ENCODE measurements at regions of chr11 and their contacts with region 1.

Region 1: GRCh38 chr11:128630367-128631230 is 43.2 kb upstream of the ETS1 start:
- DNase-seq: peak; percentile 84 to 88 (median 86)
- H3K4me3 ChIP-seq: no peak overlapping the region
- H3K4me3 Mint-ChIP-seq: peak overlapping the region in 7 of 8 donors; percentile 45 to 88 (median 75)
- H3K27ac ChIP-seq: peak overlapping the region; percentile 49
- H3K27ac Mint-ChIP-seq: peak overlapping the region; percentile 92 to 97 (median 93)
- H3K4me1 ChIP-seq: peaks cover 64% of the 10 kb centered on the region
- H3K4me1 Mint-ChIP-seq: peaks cover 49 to 68% (median 59%) of the 10 kb centered on the region in 4 donors
- H3K27me3 ChIP-seq: no peaks in the 10 kb centered on the region
- H3K27me3 Mint-ChIP-seq: no peaks in the 10 kb centered on the region

Region 2: GRCh38 chr11:128172046-128172878 is 458.3 kb before region 1 on chr11:
- CTCF ChIA-PET with region 1: interaction called, 252 read pairs
- POLR2A ChIA-PET with region 1: interaction called, 7 read pairs
- intact Hi-C with region 1: loop called (anchors 1 kb)
- DNase-seq: peak; percentile 75 to 81 (median 77)
- H3K4me3 ChIP-seq: no peak overlapping the region
- H3K4me3 Mint-ChIP-seq: no peak overlapping the region
- H3K27ac ChIP-seq: no peak overlapping the region
- H3K27ac Mint-ChIP-seq: peak overlapping the region in 1 of 7 donors; percentile 11
- H3K4me1 ChIP-seq: no peaks in the 10 kb centered on the region
- H3K4me1 Mint-ChIP-seq: peaks cover 0 to 4% (median under 1%) of the 10 kb centered on the region in 4 donors
- H3K27me3 ChIP-seq: no peaks in the 10 kb centered on the region
- H3K27me3 Mint-ChIP-seq: no peaks in the 10 kb centered on the region

Region 3: GRCh38 chr11:128302425-128303186 is 328.0 kb before region 1 on chr11:
- CTCF ChIA-PET with region 1: interaction called, 14 read pairs
- POLR2A ChIA-PET with region 1: interaction called, 49 read pairs
- intact Hi-C with region 1: loop called (anchors 1 kb)
- DNase-seq: peak; percentile 88 to 96 (median 94)
- H3K4me3 ChIP-seq: peak overlapping the region; percentile 54 to 77
- H3K4me3 Mint-ChIP-seq: peak overlapping the region; percentile 90 to 95 (median 92)
- H3K27ac ChIP-seq: peak overlapping the region; percentile 93
- H3K27ac Mint-ChIP-seq: peak overlapping the region; percentile 95 to 100 (median 98)
- H3K4me1 ChIP-seq: peaks cover 98% of the 10 kb centered on the region
- H3K4me1 Mint-ChIP-seq: peaks cover 72 to 97% (median 86%) of the 10 kb centered on the region in 4 donors
- H3K27me3 ChIP-seq: no peaks in the 10 kb centered on the region
- H3K27me3 Mint-ChIP-seq: no peaks in the 10 kb centered on the region

Region 4: GRCh38 chr11:128488471-128488870 is 142.1 kb before region 1 on chr11:
- CTCF ChIA-PET with region 1: interaction called, 12 read pairs
- POLR2A ChIA-PET with region 1: interaction called, 9 read pairs
- intact Hi-C with region 1: no loop called
- DNase-seq: peak in 1 of 5 donors; percentile 85
- H3K4me3 ChIP-seq: peak overlapping the region in 1 of 2 donors; percentile 11
- H3K4me3 Mint-ChIP-seq: peak overlapping the region; percentile 10 to 81 (median 68)
- H3K27ac ChIP-seq: peak overlapping the region; percentile 89
- H3K27ac Mint-ChIP-seq: peak overlapping the region; percentile 90 to 99 (median 97)
- H3K4me1 ChIP-seq: peaks cover 99% of the 10 kb centered on the region
- H3K4me1 Mint-ChIP-seq: peaks cover 92 to 99% (median 95%) of the 10 kb centered on the region in 4 donors
- H3K27me3 ChIP-seq: no peaks in the 10 kb centered on the region
- H3K27me3 Mint-ChIP-seq: no peaks in the 10 kb centered on the region

Region 5: DNA sequence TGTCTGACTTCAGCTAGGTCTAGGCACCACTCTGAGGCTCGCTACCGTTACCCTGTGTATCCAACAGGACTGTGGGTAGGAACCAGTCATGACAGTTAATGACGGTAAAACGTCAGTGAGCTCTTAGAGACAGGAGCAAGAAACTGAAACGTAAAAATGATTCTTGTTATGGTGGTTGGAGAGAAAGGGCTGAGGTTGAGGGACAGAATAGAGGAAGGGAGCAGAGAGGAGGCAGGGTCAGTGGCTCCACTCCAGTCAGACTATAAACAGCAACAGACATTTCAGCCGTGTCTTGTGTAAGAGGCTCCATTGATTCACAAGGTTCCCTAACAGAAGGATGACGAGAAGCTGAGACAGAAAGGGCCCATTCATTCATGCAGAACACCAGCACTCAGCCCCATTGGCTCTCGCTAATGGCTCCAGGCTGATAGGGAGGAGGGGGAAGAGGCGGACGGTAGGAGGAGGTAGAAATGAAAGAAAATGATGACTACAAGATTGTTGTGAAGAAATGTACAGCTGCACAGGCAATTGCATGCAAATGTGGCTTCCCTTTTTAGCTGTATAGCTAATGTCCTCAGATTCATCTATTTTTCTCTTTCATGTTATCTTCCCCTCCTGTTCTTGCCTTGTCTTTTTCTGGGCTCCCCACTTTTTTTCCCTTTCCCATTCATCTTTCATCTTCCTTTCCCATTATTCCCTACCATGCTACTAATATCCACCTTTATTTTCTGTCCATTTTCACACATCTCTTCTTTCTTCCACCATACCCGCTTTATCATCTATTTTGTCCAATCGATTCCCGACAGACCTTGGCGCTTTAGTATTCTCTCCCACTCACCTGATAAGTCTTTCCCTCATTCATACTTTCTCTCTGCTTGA is 77.6 kb before region 1 on chr11:
- CTCF ChIA-PET with region 1: interaction called, 19 read pairs
- POLR2A ChIA-PET with region 1: interaction called, 4 read pairs
- intact Hi-C with region 1: loop called (anchors 2 kb)
- DNase-seq: peak in 4 of 5 donors; percentile 16 to 41 (median 30)
- H3K4me3 ChIP-seq: no peak overlapping the region
- H3K4me3 Mint-ChIP-seq: peak overlapping the region; percentile 45 to 69 (median 64)
- H3K27ac ChIP-seq: peak overlapping the region; percentile 28
- H3K27ac Mint-ChIP-seq: peak overlapping the region; percentile 73 to 94 (median 87)
- H3K4me1 ChIP-seq: peaks cover 59% of the 10 kb centered on the region
- H3K4me1 Mint-ChIP-seq: peaks cover 42 to 62% (median 50%) of the 10 kb centered on the region in 4 donors
- H3K27me3 ChIP-seq: no peaks in the 10 kb centered on the region
- H3K27me3 Mint-ChIP-seq: no peaks in the 10 kb centered on the region

Region 6: GRCh38 chr11:128831174-128832120 is 200.8 kb after region 1 on chr11:
- CTCF ChIA-PET with region 1: interaction called, 83 read pairs
- POLR2A ChIA-PET with region 1: interaction called, 5 read pairs
- intact Hi-C with region 1: loop called (anchors 1 kb)
- DNase-seq: peak; percentile 79 to 85 (median 83)
- H3K4me3 ChIP-seq: peak overlapping the region in 1 of 2 donors; percentile 12
- H3K4me3 Mint-ChIP-seq: peak overlapping the region; percentile 46 to 91 (median 82)
- H3K27ac ChIP-seq: peak overlapping the region; percentile 76
- H3K27ac Mint-ChIP-seq: peak overlapping the region; percentile 86 to 98 (median 97)
- H3K4me1 ChIP-seq: peaks cover 24% of the 10 kb centered on the region
- H3K4me1 Mint-ChIP-seq: peaks cover 21 to 49% (median 36%) of the 10 kb centered on the region in 4 donors
- H3K27me3 ChIP-seq: no peaks in the 10 kb centered on the region
- H3K27me3 Mint-ChIP-seq: no peaks in the 10 kb centered on the region

Measured in CD4-positive, alpha-beta memory T cell (primary cell).